ENCODE measurements at regions of chr17 and their contacts with region 1.

Region 1: GRCh38 chr17:34998205-34998604 is 17.9 kb downstream of the LIG3 start:
- DNase-seq: peak; percentile 78
- ATAC-seq: peak; percentile 81

Region 2: DNA sequence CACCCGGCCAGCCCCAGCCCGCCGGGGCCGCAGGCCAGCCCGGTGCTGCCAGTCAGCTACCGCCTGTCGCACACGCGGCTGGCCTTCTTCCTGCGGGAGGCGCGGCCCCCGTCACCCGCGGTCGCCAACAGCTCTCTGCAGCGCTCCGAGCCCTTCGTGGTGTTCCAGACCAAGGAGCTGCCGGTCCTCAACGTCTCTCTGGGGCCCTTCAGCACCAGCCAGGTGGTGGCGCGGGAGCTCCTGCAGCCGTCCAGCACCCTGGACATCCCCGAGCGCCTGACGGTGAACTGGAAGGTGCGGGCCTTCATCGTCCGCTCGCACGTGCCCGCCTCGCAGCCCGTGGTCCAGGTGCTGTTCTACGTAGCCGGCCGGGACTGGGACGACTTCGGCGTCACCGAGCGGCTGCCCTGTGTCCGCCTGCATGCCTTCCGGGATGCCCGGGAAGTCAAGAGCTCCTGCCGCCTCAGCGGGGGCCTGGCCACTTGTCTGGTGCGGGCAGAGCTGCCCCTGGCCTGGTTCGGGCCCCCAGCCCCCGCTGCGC is 372.0 kb before region 1 on chr17:
- intact Hi-C with region 1: no loop called
- DNase-seq: peak; percentile 35
- ATAC-seq: peak; percentile 37

Region 3: GRCh38 chr17:34902831-34903547 is 95.2 kb before region 1 on chr17:
- intact Hi-C with region 1: no loop called
- DNase-seq: no peak
- ATAC-seq: no peak

Region 4: DNA sequence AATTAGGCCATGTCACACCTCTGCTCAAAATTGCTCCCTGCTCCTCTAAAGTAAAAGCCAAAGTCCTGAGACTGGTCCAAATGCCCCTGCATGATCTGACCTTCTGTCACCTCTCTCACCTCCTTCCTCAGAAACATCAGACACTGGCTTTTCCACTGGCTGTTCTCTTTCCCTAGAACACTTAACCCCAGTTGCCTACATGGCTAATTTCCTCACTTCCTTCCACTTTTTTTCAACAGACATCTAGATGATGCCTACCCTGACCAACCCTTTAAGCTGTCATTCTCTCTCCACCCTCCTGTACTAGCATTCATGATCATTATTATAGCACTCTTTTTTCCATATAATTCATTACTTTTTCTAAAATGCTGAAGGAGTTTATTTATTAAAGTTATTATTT is 67.9 kb before region 1 on chr17:
- intact Hi-C with region 1: no loop called
- DNase-seq: no peak
- ATAC-seq: no peak

Region 5: GRCh38 chr17:35089586-35090296 is 91.5 kb after region 1 on chr17:
- intact Hi-C with region 1: loop called (anchors 10 kb)
- DNase-seq: no peak
- ATAC-seq: peak; percentile 20

Region 6: GRCh38 chr17:35119368-35120165 is 121.4 kb after region 1 on chr17 and contains the start of gene RAD51D:
- intact Hi-C with region 1: loop called (anchors 10 kb)
- DNase-seq: peak; percentile 88
- ATAC-seq: peak; percentile 98
- total RNA-seq, gene RAD51D: 6.4 TPM